ENCODE measurements at regions of chr1 and their contacts with region 1.

Region 1: DNA sequence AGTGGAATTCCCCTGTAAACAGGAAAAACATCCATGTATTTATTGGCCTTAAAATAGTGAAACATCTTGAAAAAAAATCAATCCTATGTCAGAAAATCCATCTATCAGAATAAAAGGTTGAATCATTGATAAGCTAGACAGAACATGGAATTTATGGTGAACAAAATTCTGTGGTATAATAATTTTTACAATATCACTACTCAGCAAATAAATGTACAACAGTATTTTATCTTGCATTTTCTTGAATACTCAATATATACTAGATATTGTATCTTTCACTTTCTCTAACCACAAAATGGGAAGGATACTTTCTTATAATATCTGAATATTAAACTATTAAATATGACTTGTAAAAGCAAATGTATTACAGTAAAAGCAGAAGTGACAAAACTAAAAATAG is 5.7 kb upstream of the UBE4B start:
- DNase-seq: no peak
- ATAC-seq: no peak
- H3K4me3 ChIP-seq: no peak overlapping the region
- H3K27ac ChIP-seq: no peak overlapping the region
- H3K4me1 ChIP-seq: no peaks in the 10 kb centered on the region
- H3K27me3 ChIP-seq: no peaks in the 10 kb centered on the region
- CTCF ChIP-seq: no peak

Region 2: GRCh38 chr1:9867408-9868243 is 159.4 kb before region 1 on chr1:
- intact Hi-C with region 1: no loop called
- DNase-seq: peak; percentile 80 to 90
- ATAC-seq: peak; percentile 84 to 94 (median 87)
- H3K4me3 ChIP-seq: no peak overlapping the region
- H3K27ac ChIP-seq: no peak overlapping the region
- H3K4me1 ChIP-seq: peaks cover 18% of the 10 kb centered on the region
- H3K27me3 ChIP-seq: no peaks in the 10 kb centered on the region
- CTCF ChIP-seq: peak; percentile 99

Region 3: DNA sequence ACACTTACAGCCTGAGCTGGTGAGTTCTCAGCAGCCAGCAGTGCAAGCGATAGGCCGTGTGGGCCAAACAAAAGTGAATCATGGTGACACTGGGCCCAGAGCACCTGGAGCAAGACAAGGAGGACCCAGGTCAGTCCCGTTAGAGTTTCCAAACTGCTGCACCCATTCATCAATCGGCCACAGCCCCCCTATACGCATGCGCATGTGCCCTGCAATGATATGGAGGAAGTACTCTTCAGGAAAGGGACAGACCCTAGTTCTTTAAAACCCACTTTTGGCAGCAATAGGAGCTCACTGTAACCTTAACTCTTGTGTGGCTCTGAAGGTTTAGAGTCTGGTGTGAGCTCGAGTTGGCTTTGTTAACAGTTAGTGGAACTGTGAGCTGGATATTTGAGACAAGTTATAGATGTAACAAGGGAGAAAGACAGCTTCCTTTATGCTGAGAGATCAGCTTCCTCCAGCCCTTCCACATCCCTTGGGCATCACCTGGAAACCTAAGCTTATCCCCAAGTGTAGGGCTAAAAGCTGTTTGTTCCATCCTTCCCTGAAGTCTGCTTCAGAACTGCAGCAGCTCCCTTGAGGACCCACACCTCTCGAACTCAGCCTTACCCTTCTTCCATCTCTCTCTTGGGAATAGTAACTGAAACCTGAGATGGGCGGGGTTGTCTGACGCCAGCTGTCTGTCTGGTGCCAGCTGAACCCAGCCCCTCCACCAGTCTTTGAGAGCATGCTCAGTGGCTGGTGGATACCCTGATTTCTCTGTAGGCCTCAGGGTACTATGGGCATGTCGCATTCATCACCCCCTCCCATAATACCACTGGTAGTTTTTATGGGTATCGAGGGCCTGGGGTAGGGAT is 66.1 kb before region 1 on chr1:
- intact Hi-C with region 1: loop called in 1 of 2 experiments (anchors 5 kb)
- DNase-seq: no peak
- ATAC-seq: peak in 2 of 4 donors; percentile 44 to 70
- H3K4me3 ChIP-seq: no peak overlapping the region
- H3K27ac ChIP-seq: no peak overlapping the region
- H3K4me1 ChIP-seq: peaks cover 9% of the 10 kb centered on the region
- H3K27me3 ChIP-seq: no peaks in the 10 kb centered on the region
- CTCF ChIP-seq: no peak

Region 4: DNA sequence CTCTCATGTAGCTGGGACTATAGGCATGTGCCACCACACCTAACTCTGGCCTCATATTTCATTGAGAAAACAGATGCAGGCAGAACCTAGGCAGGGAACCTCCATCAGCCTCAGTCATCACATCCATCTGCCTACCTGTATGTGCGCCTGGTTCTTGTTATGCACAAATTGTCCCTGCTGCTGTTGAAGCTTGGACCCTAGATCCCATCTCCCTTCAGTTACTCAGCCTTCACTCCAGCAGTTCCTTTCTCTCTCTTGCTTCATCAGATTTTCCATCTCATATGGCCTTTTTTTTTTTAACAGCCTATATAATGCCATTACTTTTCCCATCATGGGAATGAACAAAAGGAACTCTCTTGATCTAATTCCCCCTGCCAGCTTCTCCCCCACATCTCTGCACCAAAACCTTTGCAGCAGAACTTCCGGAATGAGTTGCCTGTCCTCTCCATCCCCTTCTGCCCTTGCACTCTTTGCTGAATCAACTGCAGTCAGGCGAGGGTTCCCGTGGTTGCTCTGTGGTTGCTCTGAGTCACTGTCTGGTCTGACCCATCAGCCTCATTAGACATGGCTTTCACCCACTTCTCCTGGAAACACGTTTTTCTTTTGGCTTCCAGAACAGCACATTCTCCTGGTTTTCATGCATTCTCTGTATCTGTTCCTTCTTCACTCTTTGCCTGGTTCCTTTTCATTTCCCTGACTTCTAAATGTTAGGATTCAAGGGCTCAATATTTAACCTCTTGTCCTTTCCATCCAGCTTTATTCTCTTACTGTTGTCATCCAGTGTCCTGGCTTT is 47.2 kb after region 1 on chr1:
- intact Hi-C with region 1: no loop called
- DNase-seq: peak in 1 of 2 donors; percentile 38
- ATAC-seq: peak; percentile 66 to 82 (median 80)
- H3K4me3 ChIP-seq: no peak overlapping the region
- H3K27ac ChIP-seq: no peak overlapping the region
- H3K4me1 ChIP-seq: no peaks in the 10 kb centered on the region
- H3K27me3 ChIP-seq: no peaks in the 10 kb centered on the region
- CTCF ChIP-seq: no peak

Measured in psoas muscle (tissue), 8 donors.